Activated CD4-positive, alpha-beta T cell treated with anti-CD3 and anti-CD28 coated beads, Interleukin-2, amount 10 ng/mL, durations not matched to agents 7 days and 5 days (primary cell): ENCODE measurements at regions of chr17 and their contacts with region 1.

Region 1: GRCh38 chr17:58541249-58541648 is 26.8 kb upstream of the MTMR4 start:
- DNase-seq: no peak
- H3K4me3 Mint-ChIP-seq: no peak overlapping the region
- H3K27ac Mint-ChIP-seq: no peak overlapping the region
- H3K4me1 Mint-ChIP-seq: no peaks in the 10 kb centered on the region
- H3K27me3 Mint-ChIP-seq: peaks cover 9% of the 10 kb centered on the region

Region 2: GRCh38 chr17:58527306-58527705 is 13.9 kb before region 1 on chr17:
- CTCF ChIA-PET with region 1: interaction called, 11 read pairs
- POLR2A ChIA-PET with region 1: no interaction called
- DNase-seq: no peak
- H3K4me3 Mint-ChIP-seq: no peak overlapping the region
- H3K27ac Mint-ChIP-seq: peak overlapping the region; percentile 88
- H3K4me1 Mint-ChIP-seq: peaks cover 21% of the 10 kb centered on the region
- H3K27me3 Mint-ChIP-seq: peaks cover 16% of the 10 kb centered on the region

Region 3: DNA sequence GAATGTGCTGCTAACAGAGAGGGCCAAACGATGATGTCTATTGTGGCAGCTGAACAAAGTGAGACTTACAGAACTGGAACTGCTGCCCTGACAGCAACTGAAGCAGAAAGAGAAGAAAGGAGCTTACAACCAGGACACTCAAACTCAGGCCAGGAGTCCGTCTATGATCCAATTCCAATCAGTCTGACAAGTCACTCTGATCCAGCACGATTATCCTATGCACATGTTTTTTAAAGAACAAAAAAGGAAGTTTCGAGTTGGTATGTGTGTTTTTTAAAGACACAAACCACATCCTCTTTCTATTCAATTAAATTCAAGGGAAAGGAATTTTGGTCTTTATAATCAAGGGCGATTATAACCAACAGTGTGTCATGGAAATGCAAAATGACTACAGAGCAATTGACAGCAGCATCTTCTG is 15.6 kb after region 1 on chr17:
- CTCF ChIA-PET with region 1: interaction called, 16 read pairs
- POLR2A ChIA-PET with region 1: no interaction called
- DNase-seq: no peak
- H3K4me3 Mint-ChIP-seq: no peak overlapping the region
- H3K27ac Mint-ChIP-seq: peak overlapping the region; percentile 58
- H3K4me1 Mint-ChIP-seq: peaks cover 13% of the 10 kb centered on the region
- H3K27me3 Mint-ChIP-seq: peaks cover 5% of the 10 kb centered on the region